ENCODE measurements at regions of chr2 and their contacts with region 1.

Region 1: GRCh38 chr2:180125245-180125962 is 118.3 kb upstream of the CWC22 start:
- DNase-seq: peak; percentile 88
- H3K4me3 Mint-ChIP-seq: no peak overlapping the region
- H3K27ac Mint-ChIP-seq: no peak overlapping the region
- H3K4me1 Mint-ChIP-seq: peaks cover 10% of the 10 kb centered on the region
- H3K27me3 Mint-ChIP-seq: no peaks in the 10 kb centered on the region
- CTCF ChIP-seq: peak; percentile 46

Region 2: GRCh38 chr2:179758636-179759035 is 366.8 kb before region 1 on chr2:
- CTCF ChIA-PET with region 1: no interaction called
- POLR2A ChIA-PET with region 1: no interaction called
- intact Hi-C with region 1: no loop called
- DNase-seq: no peak
- H3K4me3 Mint-ChIP-seq: no peak overlapping the region
- H3K27ac Mint-ChIP-seq: no peak overlapping the region
- H3K4me1 Mint-ChIP-seq: no peaks in the 10 kb centered on the region
- H3K27me3 Mint-ChIP-seq: no peaks in the 10 kb centered on the region
- CTCF ChIP-seq: no peak

Region 3: GRCh38 chr2:180012523-180012922 is 112.9 kb before region 1 on chr2:
- CTCF ChIA-PET with region 1: interaction called, 4 read pairs
- POLR2A ChIA-PET with region 1: no interaction called
- intact Hi-C with region 1: loop called (anchors 1 kb)
- DNase-seq: peak; percentile 94
- H3K4me3 Mint-ChIP-seq: peak overlapping the region; percentile 52
- H3K27ac Mint-ChIP-seq: peak overlapping the region; percentile 77
- H3K4me1 Mint-ChIP-seq: peaks cover 27% of the 10 kb centered on the region
- H3K27me3 Mint-ChIP-seq: no peaks in the 10 kb centered on the region
- CTCF ChIP-seq: peak; percentile 22

Region 4: GRCh38 chr2:180240774-180241173 is 115.4 kb after region 1 on chr2:
- CTCF ChIA-PET with region 1: interaction called, 14 read pairs
- POLR2A ChIA-PET with region 1: interaction called, 5 read pairs
- intact Hi-C with region 1: loop called (anchors 2 kb)
- DNase-seq: peak; percentile 51
- H3K4me3 Mint-ChIP-seq: no peak overlapping the region
- H3K27ac Mint-ChIP-seq: no peak overlapping the region
- H3K4me1 Mint-ChIP-seq: peaks cover 6% of the 10 kb centered on the region
- H3K27me3 Mint-ChIP-seq: no peaks in the 10 kb centered on the region
- CTCF ChIP-seq: peak; percentile 49

Region 5: GRCh38 chr2:180980106-180980942 is 854.9 kb after region 1 on chr2 and contains the start of gene UBE2E3:
- CTCF ChIA-PET with region 1: interaction called, 14 read pairs
- POLR2A ChIA-PET with region 1: interaction called, 7 read pairs
- intact Hi-C with region 1: loop called (anchors 1 kb)
- DNase-seq: peak; percentile 78
- H3K4me3 Mint-ChIP-seq: peak within 1 kb of the TSS; percentile 93
- H3K27ac Mint-ChIP-seq: peak within 1 kb of the TSS; percentile 98
- H3K4me1 Mint-ChIP-seq: peaks cover 37% of the 10 kb centered on the region
- H3K27me3 Mint-ChIP-seq: no peaks in the 10 kb centered on the region
- CTCF ChIP-seq: peak; percentile 71
- total RNA-seq, gene UBE2E3: 69.0 and 69.3 TPM in 2 replicates

Region 6: DNA sequence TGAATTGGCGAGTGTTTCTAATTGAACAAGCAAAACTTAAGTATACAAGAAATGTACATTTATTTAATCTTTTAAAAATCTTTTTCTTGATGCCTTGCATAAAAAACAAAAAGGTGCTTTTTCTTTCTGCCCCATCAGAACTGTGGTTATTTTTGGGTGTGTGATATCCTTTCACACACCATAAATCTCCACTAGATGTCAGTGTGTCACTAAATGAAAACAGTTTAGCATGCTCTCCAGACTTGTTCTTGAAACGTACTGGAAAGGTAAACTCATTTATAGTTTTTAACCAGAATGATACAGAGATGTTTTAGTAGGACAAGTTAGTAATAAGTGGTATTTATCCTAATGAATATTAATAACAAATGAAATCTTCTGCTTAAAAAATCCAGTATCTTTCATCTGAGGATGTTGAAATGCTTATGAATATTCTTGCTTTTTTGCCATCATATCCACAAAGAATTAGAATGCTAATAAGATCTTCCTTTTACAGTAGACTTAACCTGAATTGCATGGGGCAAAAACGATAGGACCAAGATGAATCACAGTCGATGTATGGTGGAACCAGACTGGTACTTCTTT is 951.8 kb after region 1 on chr2:
- CTCF ChIA-PET with region 1: interaction called, 6 read pairs
- POLR2A ChIA-PET with region 1: no interaction called
- intact Hi-C with region 1: loop called (anchors 1 kb)
- DNase-seq: peak; percentile 70
- H3K4me3 Mint-ChIP-seq: no peak overlapping the region
- H3K27ac Mint-ChIP-seq: no peak overlapping the region
- H3K4me1 Mint-ChIP-seq: peaks cover 23% of the 10 kb centered on the region
- H3K27me3 Mint-ChIP-seq: no peaks in the 10 kb centered on the region
- CTCF ChIP-seq: peak; percentile 43

Region 7: GRCh38 chr2:181466661-181467576 is 1341.5 kb after region 1 on chr2:
- CTCF ChIA-PET with region 1: interaction called, 8 read pairs
- POLR2A ChIA-PET with region 1: no interaction called
- intact Hi-C with region 1: loop called (anchors 1 kb)
- DNase-seq: peak; percentile 63
- H3K4me3 Mint-ChIP-seq: no peak overlapping the region
- H3K27ac Mint-ChIP-seq: no peak overlapping the region
- H3K4me1 Mint-ChIP-seq: no peaks in the 10 kb centered on the region
- H3K27me3 Mint-ChIP-seq: no peaks in the 10 kb centered on the region
- CTCF ChIP-seq: peak; percentile 65

Region 8: DNA sequence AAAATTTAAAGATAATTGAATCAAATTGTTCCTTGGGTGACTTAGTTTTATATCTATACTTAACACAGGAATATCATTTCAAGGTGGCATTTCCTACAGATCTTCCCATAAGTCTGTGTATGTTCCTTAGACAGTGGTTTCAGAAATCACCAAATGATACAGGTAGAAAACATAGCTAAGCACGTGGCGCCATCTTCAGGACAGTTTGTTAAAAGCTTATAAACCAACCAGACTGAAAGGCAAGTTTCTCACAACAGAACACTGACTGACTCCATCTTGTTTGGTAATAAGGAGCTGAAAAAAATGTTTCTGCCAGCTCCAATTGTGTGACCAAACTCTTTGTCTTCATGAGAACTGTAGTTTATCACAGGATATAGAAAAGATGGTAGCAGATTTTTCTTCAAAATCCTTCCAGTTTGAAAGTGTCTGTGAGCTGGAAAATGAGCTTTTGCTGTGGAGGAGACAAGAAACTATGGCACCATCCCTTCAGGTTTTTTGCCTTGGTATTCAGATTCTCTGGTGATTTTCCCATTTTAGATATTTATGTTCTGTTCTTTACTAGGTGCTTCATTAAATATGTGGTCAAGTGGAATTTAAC is 1589.7 kb after region 1 on chr2:
- CTCF ChIA-PET with region 1: interaction called, 23 read pairs
- POLR2A ChIA-PET with region 1: no interaction called
- intact Hi-C with region 1: loop called (anchors 1 kb)
- DNase-seq: peak; percentile 87
- H3K4me3 Mint-ChIP-seq: no peak overlapping the region
- H3K27ac Mint-ChIP-seq: no peak overlapping the region
- H3K4me1 Mint-ChIP-seq: no peaks in the 10 kb centered on the region
- H3K27me3 Mint-ChIP-seq: no peaks in the 10 kb centered on the region
- CTCF ChIP-seq: peak; percentile 74